Dorsolateral prefrontal cortex (tissue), 120 donors: ENCODE measurements at regions of chr18 and their contacts with region 1.

Region 1: GRCh38 chr18:21704603-21705364 is at the start of gene ABHD3:
- DNase-seq: peak; percentile 79 to 95 (median 88)
- H3K4me3 ChIP-seq: peak within 1 kb of the TSS; percentile 54 to 96 (median 87)
- H3K27ac ChIP-seq: peak within 1 kb of the TSS; percentile 57 to 99 (median 92)
- H3K27me3 ChIP-seq: no peaks in the 10 kb centered on the region
- CTCF ChIP-seq: peak in 50 of 56 donors; percentile 14 to 58 (median 39)
- total RNA-seq, gene ABHD3: 7.1 to 49.7 (median 14.0) TPM

Region 2: DNA sequence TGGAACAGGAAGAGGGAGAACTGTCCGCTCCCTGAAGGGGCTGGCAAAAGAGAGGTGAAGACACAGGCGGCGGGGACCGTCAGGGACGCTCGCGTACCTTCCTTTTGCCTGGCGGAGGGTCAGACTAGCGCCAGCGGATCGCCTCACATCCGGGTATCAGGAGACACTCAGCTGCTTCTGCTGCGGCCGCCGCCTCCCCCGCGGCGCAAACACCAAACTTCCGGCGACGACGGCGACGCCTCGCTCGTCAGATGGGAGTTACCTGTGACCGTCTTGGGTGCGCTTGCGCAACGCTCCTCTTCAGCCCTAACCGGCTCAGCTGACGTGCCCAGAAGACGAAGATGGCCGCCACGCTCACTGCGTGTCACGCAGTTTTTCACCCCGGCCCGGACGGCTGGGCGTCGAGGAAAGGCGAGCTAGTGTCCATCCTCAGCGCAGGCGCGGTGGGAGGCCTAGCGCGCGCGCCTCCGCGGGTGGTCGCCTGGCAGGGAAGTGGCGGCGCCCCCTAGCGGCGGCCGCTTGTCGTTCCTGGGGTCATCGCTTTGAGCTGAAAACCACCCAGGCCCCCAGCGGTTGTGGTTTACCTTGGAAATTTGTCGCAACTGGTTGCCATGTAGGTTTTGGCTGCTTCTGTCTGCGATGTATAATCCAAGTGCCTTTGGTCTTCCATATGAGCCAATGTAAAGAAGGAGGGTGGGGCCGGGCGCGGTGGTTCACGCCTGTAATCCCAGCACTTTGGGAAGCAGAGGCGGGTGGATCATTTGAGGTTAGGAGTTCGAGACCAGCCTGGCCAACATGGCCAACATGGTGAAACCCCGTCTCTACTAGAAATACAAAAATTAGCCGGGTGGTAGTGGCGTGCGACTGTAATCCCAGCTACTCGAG is 104.0 kb before region 1 on chr18 and contains the start of gene ESCO1:
- intact Hi-C with region 1: loop called in 1 of 2 experiments (anchors 5 kb)
- DNase-seq: peak; percentile 81 to 96 (median 91)
- H3K4me3 ChIP-seq: peak within 1 kb of the TSS; percentile 63 to 100 (median 96)
- H3K27ac ChIP-seq: peak within 1 kb of the TSS; percentile 25 to 99 (median 93)
- H3K27me3 ChIP-seq: no peaks in the 10 kb centered on the region
- CTCF ChIP-seq: peak; percentile 85 to 99 (median 96)
- total RNA-seq, gene ESCO1: 13.0 to 29.8 (median 18.0) TPM

Region 3: GRCh38 chr18:21740724-21741510 is 36.1 kb after region 1 on chr18 and contains the start of gene MIB1:
- intact Hi-C with region 1: loop called (anchors 1 kb)
- DNase-seq: peak in 5 of 10 donors; percentile 36 to 64 (median 55)
- H3K4me3 ChIP-seq: peak within 1 kb of the TSS; percentile 69 to 99 (median 90)
- H3K27ac ChIP-seq: peak within 1 kb of the TSS; percentile 93 to 100 (median 99)
- H3K27me3 ChIP-seq: no peaks in the 10 kb centered on the region
- CTCF ChIP-seq: peak in 17 of 56 donors; percentile 2 to 38 (median 20)
- total RNA-seq, gene MIB1: 47.7 to 85.3 (median 59.8) TPM